PC-3 (cell line): ENCODE measurements at regions of chr22 and their contacts with region 1.

Region 1: DNA sequence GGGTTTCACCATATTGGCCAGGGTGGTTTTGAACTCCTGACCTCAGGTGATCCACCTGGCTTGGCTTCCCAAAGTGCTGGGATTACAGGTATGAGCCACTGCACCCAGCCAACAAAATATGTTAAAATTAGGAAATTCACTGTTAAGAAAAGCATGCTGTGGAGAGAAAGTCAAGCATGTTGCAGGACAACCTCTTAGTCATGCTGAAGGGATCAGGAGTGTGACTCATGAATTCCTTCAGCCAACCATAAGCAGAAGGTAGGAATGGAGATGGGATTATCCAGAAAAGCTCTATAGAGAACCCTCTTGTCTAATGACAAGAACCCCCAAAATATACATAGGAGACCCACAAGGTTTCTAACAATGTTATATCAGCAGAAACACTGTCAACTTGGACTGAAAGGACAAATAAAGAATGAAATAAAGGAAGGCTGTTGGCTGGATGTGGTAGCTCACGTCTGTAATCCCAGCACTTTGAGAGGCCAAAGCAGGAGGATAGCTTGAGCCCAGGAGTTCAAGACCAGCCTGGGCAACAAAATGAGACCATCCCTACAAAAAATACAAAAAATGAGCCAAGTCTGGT is 16.0 kb downstream of the MRTFA start:
- DNase-seq: peak; percentile 60
- ATAC-seq: peak; percentile 56; the same call in 1 of the 2 replicates
- H3K4me3 ChIP-seq: no peak overlapping the region
- H3K27ac ChIP-seq: no peak overlapping the region
- H3K4me1 ChIP-seq: peaks cover 8% of the 10 kb centered on the region
- H3K27me3 ChIP-seq: no peaks in the 10 kb centered on the region
- CTCF ChIP-seq: no peak

Region 2: GRCh38 chr22:40276996-40277823 is 343.3 kb before region 1 on chr22:
- CTCF ChIA-PET with region 1: no interaction called
- POLR2A ChIA-PET with region 1: no interaction called
- intact Hi-C with region 1: no loop called
- DNase-seq: peak; percentile 37
- ATAC-seq: peak; percentile 59
- H3K4me3 ChIP-seq: peak overlapping the region; percentile 69
- H3K27ac ChIP-seq: peak overlapping the region; percentile 96
- H3K4me1 ChIP-seq: peaks cover 38% of the 10 kb centered on the region
- H3K27me3 ChIP-seq: no peaks in the 10 kb centered on the region
- CTCF ChIP-seq: no peak

Region 3: DNA sequence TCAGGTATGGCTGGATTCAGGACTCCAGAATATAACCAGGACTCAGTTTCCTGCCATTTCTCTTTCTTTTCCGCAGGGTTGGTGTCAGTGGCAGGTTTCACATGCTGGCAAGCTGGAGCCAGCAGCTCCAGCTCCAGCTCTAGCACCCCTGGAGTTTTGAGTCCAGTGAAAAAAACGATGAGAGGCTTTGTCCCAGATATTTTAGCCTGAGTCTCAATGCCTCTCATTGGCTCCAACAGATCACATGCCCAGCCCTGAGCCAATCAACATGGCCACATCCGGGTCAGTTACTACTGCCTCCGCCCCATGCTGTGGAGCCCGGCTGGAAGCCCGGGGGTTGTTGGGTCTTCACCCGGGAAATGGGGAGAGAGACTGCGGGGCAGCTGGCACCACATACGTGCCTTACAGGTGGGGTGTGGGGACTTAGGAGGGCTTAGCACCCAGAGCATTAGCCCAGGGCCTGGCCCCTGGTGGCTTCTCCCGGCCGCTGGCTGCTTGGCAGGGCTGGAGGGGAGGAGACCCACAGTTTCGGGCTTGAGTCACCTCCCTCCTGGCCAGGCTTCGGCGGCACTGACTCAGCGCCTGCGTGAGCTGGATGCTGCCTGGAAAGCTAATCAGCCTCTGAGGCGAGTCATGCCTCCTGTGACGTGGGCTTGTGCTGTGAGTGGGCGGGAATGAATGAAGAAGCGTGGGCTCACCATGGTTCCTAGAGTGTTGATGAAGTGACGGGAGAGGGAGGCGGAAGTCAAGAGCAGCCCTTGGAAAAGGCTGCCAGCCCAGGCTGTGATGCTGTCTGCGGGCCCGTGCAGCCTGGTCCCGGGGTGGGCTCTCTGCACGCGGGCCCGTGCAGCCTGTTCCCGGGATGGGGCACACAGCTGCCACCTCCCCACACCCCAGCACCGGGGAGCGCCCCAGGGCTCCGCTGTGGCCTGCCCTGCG is 31.3 kb after region 1 on chr22:
- CTCF ChIA-PET with region 1: no interaction called
- POLR2A ChIA-PET with region 1: interaction called, 25 read pairs
- intact Hi-C with region 1: no loop called
- DNase-seq: peak; percentile 96
- ATAC-seq: peak; percentile 95
- H3K4me3 ChIP-seq: peak overlapping the region; percentile 76
- H3K27ac ChIP-seq: peak overlapping the region; percentile 99
- H3K4me1 ChIP-seq: peaks cover 21% of the 10 kb centered on the region
- H3K27me3 ChIP-seq: no peaks in the 10 kb centered on the region
- CTCF ChIP-seq: no peak

Region 4: DNA sequence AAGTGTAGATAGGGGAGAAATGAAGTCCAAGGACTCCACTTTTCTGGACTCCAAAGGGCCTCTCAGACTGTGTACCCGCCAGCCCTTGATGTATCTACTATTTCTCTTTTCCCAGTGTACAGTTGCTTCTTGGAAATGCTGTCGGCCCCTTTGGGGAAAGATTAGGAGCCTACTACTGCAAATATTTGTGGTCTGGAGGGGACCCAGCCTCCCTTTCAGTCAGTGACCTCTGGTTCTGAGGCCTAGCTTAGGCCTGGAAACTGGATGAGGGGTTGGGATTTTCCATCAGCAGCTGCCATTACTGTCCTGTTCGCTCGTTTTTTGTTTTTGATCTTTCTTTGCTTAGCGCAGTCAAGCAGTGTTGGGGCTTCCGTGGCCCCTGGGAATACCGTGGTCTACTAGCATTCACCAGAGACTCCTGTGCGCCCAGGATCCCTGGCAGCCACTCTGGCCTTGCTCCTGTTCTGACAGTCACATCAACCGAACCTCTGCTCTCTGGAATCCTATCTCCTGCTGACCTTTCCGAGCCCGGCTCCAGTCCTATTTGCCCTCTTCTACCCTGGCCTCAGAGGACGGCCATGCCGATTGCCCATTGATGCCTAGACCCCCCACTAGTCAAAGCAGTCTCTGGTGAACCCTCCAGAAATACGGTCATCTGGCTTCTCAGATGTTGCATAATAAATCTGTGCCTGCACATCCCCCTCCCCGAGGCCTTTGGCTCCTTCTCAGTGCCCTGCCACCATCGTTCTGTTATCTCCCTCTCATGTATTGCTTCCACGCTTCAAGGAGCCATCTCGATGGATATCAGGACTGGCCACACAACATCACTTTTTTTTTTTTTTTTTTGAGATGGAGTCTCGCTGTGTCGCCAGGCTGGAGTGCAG is 1900.3 kb after region 1 on chr22:
- CTCF ChIA-PET with region 1: no interaction called
- POLR2A ChIA-PET with region 1: interaction called, 10 read pairs
- intact Hi-C with region 1: no loop called
- DNase-seq: no peak
- ATAC-seq: no peak
- H3K4me3 ChIP-seq: no peak overlapping the region
- H3K27ac ChIP-seq: no peak overlapping the region
- H3K4me1 ChIP-seq: peaks cover 4% of the 10 kb centered on the region; the same call in 1 of the 2 replicates
- H3K27me3 ChIP-seq: no peaks in the 10 kb centered on the region
- CTCF ChIP-seq: no peak